ENCODE measurements at regions of chr2 and their contacts with region 1.

Region 1: GRCh38 chr2:168752361-168752760 is 50.1 kb upstream of the NOSTRIN start:
- DNase-seq: no peak
- H3K4me3 ChIP-seq: no peak overlapping the region
- H3K27ac ChIP-seq: no peak overlapping the region
- H3K4me1 ChIP-seq: no peaks in the 10 kb centered on the region
- H3K27me3 ChIP-seq: no peaks in the 10 kb centered on the region
- CTCF ChIP-seq: no peak

Region 2: DNA sequence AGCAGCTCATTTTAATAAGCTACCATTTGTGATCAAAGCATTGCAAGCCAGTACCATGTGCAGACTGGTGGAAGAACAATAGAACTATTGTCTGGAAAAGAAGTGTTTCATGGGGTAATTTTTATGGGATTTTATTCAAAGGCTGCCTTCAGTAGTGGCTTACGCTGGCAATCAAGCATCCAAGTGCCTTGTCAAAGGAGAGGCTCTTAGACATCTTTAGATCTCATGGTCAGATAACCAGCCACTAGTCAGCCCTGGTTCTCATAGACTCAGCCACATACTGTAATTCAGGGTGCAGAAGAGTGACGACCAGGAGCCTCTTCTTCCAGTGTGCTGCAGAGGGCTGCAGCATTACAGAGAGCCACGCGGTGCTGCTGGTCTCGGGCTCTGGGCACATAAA is 48.4 kb before region 1 on chr2:
- CTCF ChIA-PET with region 1: no interaction called
- POLR2A ChIA-PET with region 1: interaction called, 14 read pairs
- intact Hi-C with region 1: no loop called
- DNase-seq: no peak
- H3K4me3 ChIP-seq: no peak overlapping the region
- H3K27ac ChIP-seq: no peak overlapping the region
- H3K4me1 ChIP-seq: no peaks in the 10 kb centered on the region
- H3K27me3 ChIP-seq: no peaks in the 10 kb centered on the region
- CTCF ChIP-seq: no peak